ENCODE measurements at regions of chr6 and their contacts with region 1.

Region 1: GRCh38 chr6:63352587-63353285 is 33.0 kb upstream of the LGSN start:
- DNase-seq: peak in 3 of 6 donors; percentile 41 to 62 (median 59)
- ATAC-seq: peak; percentile 85 to 96 (median 92)
- H3K4me3 ChIP-seq: peak overlapping the region in 2 of 4 donors; percentile 11 to 21
- H3K27ac ChIP-seq: peak overlapping the region in 2 of 4 donors; percentile 62 to 65
- H3K4me1 ChIP-seq: peaks cover 4 to 13% (median 10%) of the 10 kb centered on the region in 3 donors
- H3K27me3 ChIP-seq: no peaks in the 10 kb centered on the region
- CTCF ChIP-seq: peak in 3 of 4 donors; percentile 50 to 62 (median 55)

Region 2: GRCh38 chr6:63097222-63097621 is 255.5 kb before region 1 on chr6:
- intact Hi-C with region 1: no loop called
- DNase-seq: no peak
- ATAC-seq: no peak
- H3K4me3 ChIP-seq: no peak overlapping the region
- H3K27ac ChIP-seq: no peak overlapping the region
- H3K4me1 ChIP-seq: no peaks in the 10 kb centered on the region
- H3K27me3 ChIP-seq: no peaks in the 10 kb centered on the region
- CTCF ChIP-seq: no peak

Region 3: DNA sequence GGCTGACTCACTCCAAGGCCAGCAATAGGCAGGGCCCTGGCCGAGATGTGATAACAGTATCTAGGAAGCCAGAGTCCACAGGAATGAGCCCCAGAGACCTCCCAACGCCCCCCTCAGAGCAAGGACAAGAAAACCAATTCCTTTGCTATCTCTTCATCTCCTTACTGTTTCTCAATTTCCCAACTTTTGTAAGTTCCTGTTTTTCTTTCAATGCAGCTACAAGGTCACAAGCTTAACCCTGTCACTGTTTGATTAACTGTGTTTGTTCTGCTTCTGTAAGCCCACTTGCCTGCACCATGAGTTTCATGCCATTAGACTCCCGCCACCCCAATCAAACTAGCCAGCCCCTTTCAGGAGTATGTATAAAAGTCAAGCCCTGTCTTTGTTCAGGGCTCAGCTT is 137.9 kb before region 1 on chr6:
- intact Hi-C with region 1: no loop called
- DNase-seq: no peak
- ATAC-seq: no peak
- H3K4me3 ChIP-seq: no peak overlapping the region
- H3K27ac ChIP-seq: no peak overlapping the region
- H3K4me1 ChIP-seq: no peaks in the 10 kb centered on the region
- H3K27me3 ChIP-seq: no peaks in the 10 kb centered on the region
- CTCF ChIP-seq: no peak

Region 4: DNA sequence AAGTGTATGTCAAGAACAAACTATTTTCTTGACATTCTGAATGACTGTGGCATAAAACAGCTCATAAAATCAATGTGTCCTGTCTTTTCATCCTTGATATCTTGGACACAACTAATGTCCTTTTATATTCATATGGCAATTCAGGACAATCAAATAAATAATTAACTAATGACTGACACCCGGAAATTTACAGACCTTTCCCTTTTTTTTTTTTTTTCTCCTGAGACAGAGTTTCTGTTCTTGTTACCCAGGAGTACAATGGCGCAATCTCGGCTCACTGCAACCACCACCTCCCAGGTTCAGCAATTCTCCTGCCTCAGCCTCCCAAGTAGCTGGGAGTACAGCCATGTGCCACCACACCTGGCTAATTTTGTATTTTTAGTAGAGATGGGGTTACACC is 74.1 kb after region 1 on chr6:
- intact Hi-C with region 1: no loop called
- DNase-seq: peak in 1 of 6 donors; percentile 50
- ATAC-seq: peak; percentile 73 to 88 (median 86)
- H3K4me3 ChIP-seq: no peak overlapping the region
- H3K27ac ChIP-seq: peak overlapping the region in 2 of 4 donors; percentile 10 to 39
- H3K4me1 ChIP-seq: peaks cover 0 to 4% (median 0%) of the 10 kb centered on the region in 3 donors
- H3K27me3 ChIP-seq: no peaks in the 10 kb centered on the region
- CTCF ChIP-seq: no peak

Region 5: GRCh38 chr6:63579937-63580703 is 227.4 kb after region 1 on chr6:
- intact Hi-C with region 1: loop called in 1 of 3 experiments (anchors 5 kb)
- DNase-seq: no peak
- ATAC-seq: peak in 2 of 4 donors; percentile 1 to 3
- H3K4me3 ChIP-seq: no peak overlapping the region
- H3K27ac ChIP-seq: no peak overlapping the region
- H3K4me1 ChIP-seq: peaks cover 16 to 31% (median 24%) of the 10 kb centered on the region in 3 donors
- H3K27me3 ChIP-seq: no peaks in the 10 kb centered on the region
- CTCF ChIP-seq: no peak

Measured in pancreas (tissue), 10 donors.